Activated CD8-positive, alpha-beta T cell treated with anti-CD3 and anti-CD28 coated beads, Interleukin-2, amount 10 ng/mL, durations not matched to agents 7 days and 5 days (primary cell): ENCODE measurements at regions of chr16 and their contacts with region 1.

Region 1: DNA sequence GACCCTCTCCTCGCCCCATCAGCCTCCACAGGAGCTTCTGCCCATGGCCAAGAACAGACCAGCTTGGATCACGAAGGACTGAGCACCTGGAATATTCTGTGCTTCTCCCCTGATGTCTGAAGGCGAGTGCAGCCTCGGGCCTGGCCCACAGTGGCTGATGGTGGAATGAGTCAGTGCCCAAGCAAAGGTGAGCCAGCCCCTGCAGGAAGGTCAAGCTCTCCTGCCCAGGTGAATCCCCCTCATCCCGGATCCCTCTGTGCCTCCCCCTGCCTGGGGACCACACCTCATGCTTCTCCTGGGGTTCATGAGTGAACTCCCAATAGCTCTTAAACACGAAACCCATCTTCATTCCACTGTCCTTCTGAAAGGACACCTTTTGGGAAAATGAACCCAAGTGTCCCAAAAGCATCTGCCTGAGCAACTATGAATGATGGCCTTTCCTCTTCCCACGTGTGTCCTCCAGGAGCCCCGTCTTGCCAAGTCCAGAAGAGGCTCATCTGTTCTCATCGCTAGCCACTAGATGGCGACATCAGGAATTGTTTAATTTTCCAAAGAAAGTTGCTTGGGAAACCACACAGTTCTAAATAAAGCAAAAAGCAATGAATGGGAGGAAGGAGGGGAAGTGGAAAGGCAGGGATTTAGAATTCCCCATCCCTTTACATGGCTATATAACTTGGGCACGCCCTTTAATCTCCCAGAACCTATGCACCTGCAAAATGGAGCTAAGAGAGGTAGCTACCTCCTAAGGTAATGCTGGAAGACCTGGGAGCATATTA is 9.2 kb upstream of the CDH5 start:
- DNase-seq: peak; percentile 36
- ATAC-seq: peak; percentile 61
- H3K4me3 Mint-ChIP-seq: no peak overlapping the region
- H3K27ac Mint-ChIP-seq: no peak overlapping the region
- H3K4me1 Mint-ChIP-seq: peaks cover 13% of the 10 kb centered on the region
- H3K27me3 Mint-ChIP-seq: peaks cover 24% of the 10 kb centered on the region

Region 2: GRCh38 chr16:66308101-66308500 is 49.2 kb before region 1 on chr16:
- CTCF ChIA-PET with region 1: no interaction called
- POLR2A ChIA-PET with region 1: no interaction called
- DNase-seq: no peak
- ATAC-seq: no peak
- H3K4me3 Mint-ChIP-seq: no peak overlapping the region
- H3K27ac Mint-ChIP-seq: no peak overlapping the region
- H3K4me1 Mint-ChIP-seq: no peaks in the 10 kb centered on the region
- H3K27me3 Mint-ChIP-seq: peaks cover 2% of the 10 kb centered on the region

Region 3: GRCh38 chr16:66335704-66336329 is 21.5 kb before region 1 on chr16:
- CTCF ChIA-PET with region 1: interaction called, 17 read pairs
- POLR2A ChIA-PET with region 1: no interaction called
- DNase-seq: no peak
- ATAC-seq: no peak
- H3K4me3 Mint-ChIP-seq: no peak overlapping the region
- H3K27ac Mint-ChIP-seq: no peak overlapping the region
- H3K4me1 Mint-ChIP-seq: no peaks in the 10 kb centered on the region
- H3K27me3 Mint-ChIP-seq: peaks cover 11% of the 10 kb centered on the region

Region 4: DNA sequence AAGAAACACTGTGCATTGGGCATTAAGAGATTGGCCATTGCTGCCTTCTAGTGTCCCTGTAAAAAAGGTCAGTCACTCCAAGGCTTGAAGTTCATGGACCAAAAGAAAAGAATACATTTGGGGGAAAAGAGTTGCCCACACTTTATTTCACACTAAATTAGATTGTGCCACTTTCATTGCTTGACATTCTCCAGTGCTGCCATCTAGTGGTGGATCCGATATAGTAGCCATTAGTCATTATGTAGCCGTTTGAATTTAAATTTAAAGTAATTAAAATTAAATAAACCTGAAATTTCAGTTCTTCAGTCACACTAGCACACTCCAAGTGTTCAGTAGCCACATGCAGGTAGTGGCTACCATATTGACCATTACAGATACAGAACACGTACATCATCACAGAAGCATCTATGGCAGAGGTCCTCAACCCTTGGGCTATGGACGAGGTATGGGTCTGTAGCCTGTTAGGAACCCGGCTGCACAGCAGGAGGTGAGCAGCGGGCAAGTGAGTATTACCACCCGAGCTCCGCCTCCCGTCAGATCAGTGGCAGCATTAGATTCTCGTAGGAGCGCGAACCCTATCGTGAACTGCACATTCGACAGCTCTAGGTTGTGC is 12.7 kb before region 1 on chr16:
- CTCF ChIA-PET with region 1: interaction called, 17 read pairs
- POLR2A ChIA-PET with region 1: no interaction called
- DNase-seq: peak; percentile 64
- ATAC-seq: peak; percentile 27
- H3K4me3 Mint-ChIP-seq: no peak overlapping the region
- H3K27ac Mint-ChIP-seq: no peak overlapping the region
- H3K4me1 Mint-ChIP-seq: no peaks in the 10 kb centered on the region
- H3K27me3 Mint-ChIP-seq: peaks cover 4% of the 10 kb centered on the region